Left ventricle myocardium inferior (tissue), 1 donor: ENCODE measurements at regions of chr1 and their contacts with region 1.

Region 1: GRCh38 chr1:91732291-91733107 is 153.5 kb downstream of the TGFBR3 start:
- DNase-seq: no peak
- H3K4me3 ChIP-seq: no peak overlapping the region
- H3K27ac ChIP-seq: peak overlapping the region; percentile 3
- H3K4me1 ChIP-seq: peaks cover 76% of the 10 kb centered on the region
- H3K27me3 ChIP-seq: no peaks in the 10 kb centered on the region
- CTCF ChIP-seq: no peak

Region 2: DNA sequence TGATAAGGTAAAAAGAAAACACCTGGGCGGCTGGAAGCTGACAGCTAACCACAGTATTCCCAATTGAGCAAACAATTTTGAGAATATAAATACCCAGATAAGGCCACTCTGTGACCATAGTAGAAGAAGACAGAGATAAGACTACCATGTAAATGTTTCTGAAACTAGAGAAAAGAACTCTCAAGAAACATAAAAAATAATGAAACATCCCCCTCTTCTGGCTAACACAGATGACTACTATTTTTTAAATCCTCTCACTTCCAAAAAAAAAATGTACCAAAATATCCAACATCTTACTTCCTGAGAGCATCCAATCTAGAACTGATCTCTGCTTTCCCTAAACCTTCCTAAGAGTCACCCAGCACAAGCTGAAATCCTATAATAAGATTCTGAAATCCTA is 453.7 kb before region 1 on chr1:
- intact Hi-C with region 1: no loop called
- DNase-seq: no peak
- H3K4me3 ChIP-seq: no peak overlapping the region
- H3K27ac ChIP-seq: no peak overlapping the region
- H3K4me1 ChIP-seq: peaks cover 7% of the 10 kb centered on the region
- H3K27me3 ChIP-seq: no peaks in the 10 kb centered on the region
- CTCF ChIP-seq: peak; percentile 22

Region 3: GRCh38 chr1:91404151-91405012 is 328.1 kb before region 1 on chr1 and contains the start of gene HFM1:
- intact Hi-C with region 1: no loop called
- DNase-seq: peak; percentile 86
- H3K4me3 ChIP-seq: peak within 1 kb of the TSS; percentile 76
- H3K27ac ChIP-seq: peak within 1 kb of the TSS; percentile 91
- H3K4me1 ChIP-seq: peaks cover 22% of the 10 kb centered on the region
- H3K27me3 ChIP-seq: peaks cover 18% of the 10 kb centered on the region
- CTCF ChIP-seq: peak; percentile 21
- total RNA-seq, gene HFM1: 1.7 TPM

Region 4: GRCh38 chr1:91864017-91864700 is 131.7 kb after region 1 on chr1:
- intact Hi-C with region 1: no loop called
- DNase-seq: no peak
- H3K4me3 ChIP-seq: no peak overlapping the region
- H3K27ac ChIP-seq: peak overlapping the region; percentile 44
- H3K4me1 ChIP-seq: peaks cover 58% of the 10 kb centered on the region
- H3K27me3 ChIP-seq: no peaks in the 10 kb centered on the region
- CTCF ChIP-seq: no peak

Region 5: GRCh38 chr1:91885716-91886506 is 153.4 kb after region 1 on chr1 and contains the start of gene TGFBR3:
- intact Hi-C with region 1: loop called (anchors 10 kb)
- DNase-seq: peak; percentile 94
- H3K4me3 ChIP-seq: peak within 1 kb of the TSS; percentile 97
- H3K27ac ChIP-seq: peak within 1 kb of the TSS; percentile 95
- H3K4me1 ChIP-seq: peaks cover 58% of the 10 kb centered on the region
- H3K27me3 ChIP-seq: no peaks in the 10 kb centered on the region
- CTCF ChIP-seq: peak; percentile 66
- total RNA-seq, gene TGFBR3: 24.6 TPM